Ascending aorta (tissue), 2 donors: ENCODE measurements at regions of chr11 and their contacts with region 1.

Region 1: DNA sequence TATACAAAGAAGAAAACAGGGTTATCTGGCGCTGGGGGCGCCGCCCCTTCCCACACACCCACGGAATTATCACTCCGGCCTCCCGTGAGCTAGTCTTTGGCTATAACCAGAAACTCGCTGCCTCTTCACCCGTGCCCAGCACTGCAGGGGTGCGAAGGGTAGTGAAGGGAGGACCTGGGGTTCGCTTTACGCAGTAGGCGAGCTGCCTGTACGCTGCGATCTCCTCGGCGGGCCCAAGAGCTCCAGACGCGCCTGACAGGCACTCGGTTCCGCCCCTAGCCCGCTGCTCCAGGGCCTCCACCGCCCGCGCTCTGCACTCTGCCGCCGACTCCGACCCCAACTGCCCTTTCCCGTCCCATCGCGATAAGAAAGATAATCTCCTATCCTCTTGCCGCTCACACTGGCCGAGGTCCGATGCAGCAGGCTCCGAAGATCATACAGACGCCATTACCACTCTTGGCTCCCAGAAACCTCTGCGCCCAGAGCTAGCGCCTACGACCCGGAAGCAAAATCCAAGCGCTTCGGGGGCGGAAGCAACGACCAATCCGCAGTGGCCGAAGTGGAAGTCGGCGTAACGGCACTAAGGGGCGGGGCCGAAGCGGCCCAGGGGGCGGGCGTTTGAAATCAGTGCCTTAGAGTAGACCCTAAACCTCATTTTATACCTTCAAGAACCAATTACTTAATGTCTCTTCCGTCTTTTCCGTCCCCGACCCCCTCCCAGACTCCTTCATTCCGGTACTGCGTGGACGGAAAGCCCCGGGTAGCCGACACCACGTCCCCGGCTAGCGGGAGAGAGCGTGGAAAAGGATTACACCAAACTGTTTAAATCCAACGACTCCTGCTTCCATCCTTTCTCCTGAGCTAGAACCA is at the starts of genes CWC15 and KDM4D:
- DNase-seq: peak; percentile 86 to 96
- H3K4me3 ChIP-seq: peak within 1 kb of the TSS; percentile 69 to 96
- H3K27ac ChIP-seq: peak within 1 kb of the TSS; percentile 76 to 82
- H3K4me1 ChIP-seq: peaks cover 0 to 8% of the 10 kb centered on the region in 2 donors
- H3K27me3 ChIP-seq: no peaks in the 10 kb centered on the region
- CTCF ChIP-seq: no peak
- total RNA-seq, gene CWC15: 16.2 TPM
- total RNA-seq, gene KDM4D: not detected

Region 2: GRCh38 chr11:94767761-94768601 is 205.4 kb before region 1 on chr11 and contains the start of gene AMOTL1:
- intact Hi-C with region 1: loop called (anchors 10 kb)
- DNase-seq: peak; percentile 73 to 96
- H3K4me3 ChIP-seq: peak within 1 kb of the TSS; percentile 82 to 98
- H3K27ac ChIP-seq: peak within 1 kb of the TSS; percentile 89 to 98
- H3K4me1 ChIP-seq: peaks cover 0 to 15% of the 10 kb centered on the region in 2 donors
- H3K27me3 ChIP-seq: no peaks in the 10 kb centered on the region
- CTCF ChIP-seq: peak in 1 of 3 experiments; percentile 34
- total RNA-seq, gene AMOTL1: 32.6 TPM

Region 3: GRCh38 chr11:95067039-95067840 is 93.9 kb after region 1 on chr11:
- intact Hi-C with region 1: loop called (anchors 1 kb)
- DNase-seq: peak in 1 of 2 donors; percentile 93
- H3K4me3 ChIP-seq: peak overlapping the region; percentile 88 to 95
- H3K27ac ChIP-seq: peak overlapping the region; percentile 98 to 99
- H3K4me1 ChIP-seq: peaks cover 0 to 14% of the 10 kb centered on the region in 2 donors
- H3K27me3 ChIP-seq: no peaks in the 10 kb centered on the region
- CTCF ChIP-seq: peak; percentile 71 to 78 (median 73)

Region 4: DNA sequence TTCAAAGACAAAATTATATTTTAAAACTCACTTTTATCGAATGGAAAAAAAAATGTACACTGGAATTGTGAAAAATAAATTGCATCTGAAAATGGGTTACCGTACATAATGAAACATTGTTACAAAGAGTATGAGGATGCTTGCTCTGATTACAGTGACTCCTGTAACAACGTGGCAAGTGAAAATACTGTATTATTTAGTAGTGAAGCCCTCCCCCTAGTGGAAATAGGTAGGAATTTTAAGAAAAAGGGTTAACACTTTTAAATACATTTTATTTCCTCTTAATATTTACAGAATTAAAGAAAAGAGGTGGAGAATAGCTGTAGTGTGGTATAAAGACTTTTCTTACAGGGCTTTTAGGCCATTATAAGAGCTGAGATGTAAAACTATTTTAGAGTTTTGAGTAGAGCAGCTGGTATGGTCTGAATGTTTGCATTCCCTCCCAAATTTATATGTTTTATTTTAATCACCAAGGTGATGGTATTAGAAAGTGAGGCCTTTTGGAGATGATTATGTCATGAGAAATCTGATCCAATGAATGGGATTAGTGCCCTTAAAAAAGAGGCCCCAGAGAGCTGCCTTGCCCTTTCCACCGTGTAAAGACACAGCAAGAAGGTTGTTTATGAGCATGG is 791.0 kb after region 1 on chr11:
- intact Hi-C with region 1: loop called (anchors 5 kb)
- DNase-seq: no peak
- H3K4me3 ChIP-seq: no peak overlapping the region
- H3K27ac ChIP-seq: no peak overlapping the region
- H3K4me1 ChIP-seq: no peaks in the 10 kb centered on the region
- H3K27me3 ChIP-seq: no peaks in the 10 kb centered on the region
- CTCF ChIP-seq: peak; percentile 47 to 69 (median 59)

Region 5: DNA sequence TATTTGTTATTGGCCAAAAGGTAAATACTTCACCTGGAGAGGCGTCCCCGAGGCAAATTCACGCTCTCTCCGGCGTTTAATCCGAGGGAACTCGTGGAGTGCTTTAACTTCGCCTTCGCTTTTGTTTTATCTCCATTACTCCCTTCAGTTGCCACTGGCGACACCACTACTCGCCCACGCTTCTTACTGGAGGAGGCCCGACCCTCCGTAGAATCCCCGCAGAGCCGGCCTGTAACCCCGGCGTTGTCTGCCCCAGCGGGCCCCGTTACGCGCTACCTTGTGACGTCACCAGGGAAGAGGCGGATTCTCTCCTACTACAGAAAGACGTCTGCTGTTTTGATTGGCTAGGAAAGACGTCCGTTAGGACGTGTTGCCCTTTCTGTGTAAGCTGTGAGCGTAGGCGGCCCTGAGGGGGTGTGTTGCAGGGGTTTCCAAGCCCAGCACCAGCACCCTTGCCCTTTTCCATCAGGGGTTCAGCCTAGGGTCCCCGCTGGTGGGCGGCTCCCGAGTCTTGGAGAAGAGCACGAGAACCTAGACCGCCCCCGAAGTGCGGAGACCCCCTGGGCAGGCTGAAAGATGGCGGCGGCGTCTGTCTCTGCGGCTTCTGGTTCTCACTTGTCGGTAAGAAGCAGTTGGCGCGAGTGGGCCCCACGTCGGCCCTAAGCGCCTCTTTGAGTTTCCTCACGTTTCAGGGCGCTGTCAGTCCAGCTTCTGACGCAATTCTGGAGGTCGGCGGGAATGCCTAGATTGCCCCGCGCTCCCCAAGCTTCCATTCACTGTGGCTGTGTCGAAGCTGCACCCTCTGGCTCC is 817.0 kb after region 1 on chr11 and contains the start of gene CEP57:
- intact Hi-C with region 1: loop called (anchors 2 kb)
- DNase-seq: peak; percentile 86 to 99
- H3K4me3 ChIP-seq: peak within 1 kb of the TSS; percentile 95 to 98
- H3K27ac ChIP-seq: peak within 1 kb of the TSS; percentile 91 to 100
- H3K4me1 ChIP-seq: peaks cover 0 to 22% of the 10 kb centered on the region in 2 donors
- H3K27me3 ChIP-seq: no peaks in the 10 kb centered on the region
- CTCF ChIP-seq: no peak
- total RNA-seq, gene CEP57: 5.4 TPM

Region 6: GRCh38 chr11:96389720-96390487 is 1416.6 kb after region 1 on chr11 and contains the starts of genes CCDC82 and JRKL:
- intact Hi-C with region 1: loop called (anchors 5 kb)
- DNase-seq: peak; percentile 88 to 98
- H3K4me3 ChIP-seq: peak within 1 kb of the TSS; percentile 89 to 97
- H3K27ac ChIP-seq: peak within 1 kb of the TSS; percentile 83 to 90
- H3K4me1 ChIP-seq: peaks cover 0 to 16% of the 10 kb centered on the region in 2 donors
- H3K27me3 ChIP-seq: no peaks in the 10 kb centered on the region
- CTCF ChIP-seq: no peak
- total RNA-seq, gene CCDC82: 9.5 TPM
- total RNA-seq, gene JRKL: 16.6 TPM